Activated CD4-positive, alpha-beta T cell treated with anti-CD3 and anti-CD28 coated beads for 36 hours (primary cell): ENCODE measurements at regions of chr14 and their contacts with region 1.

Region 1: GRCh38 chr14:89365061-89365801 is 51.8 kb downstream of the FOXN3 start:
- DNase-seq: peak; percentile 72
- ATAC-seq: peak; percentile 92
- H3K4me3 Mint-ChIP-seq: peak overlapping the region; percentile 70
- H3K27ac Mint-ChIP-seq: peak overlapping the region; percentile 97
- H3K4me1 Mint-ChIP-seq: peaks cover 62% of the 10 kb centered on the region
- H3K27me3 Mint-ChIP-seq: no peaks in the 10 kb centered on the region

Region 2: GRCh38 chr14:89276424-89276975 is 88.7 kb before region 1 on chr14:
- CTCF ChIA-PET with region 1: interaction called, 4 read pairs
- POLR2A ChIA-PET with region 1: no interaction called
- intact Hi-C with region 1: loop called in 1 of 2 experiments (anchors 1 kb)
- DNase-seq: peak; percentile 87
- ATAC-seq: peak; percentile 91
- H3K4me3 Mint-ChIP-seq: peak overlapping the region; percentile 3
- H3K27ac Mint-ChIP-seq: peak overlapping the region; percentile 90
- H3K4me1 Mint-ChIP-seq: peaks cover 69% of the 10 kb centered on the region
- H3K27me3 Mint-ChIP-seq: no peaks in the 10 kb centered on the region

Region 3: DNA sequence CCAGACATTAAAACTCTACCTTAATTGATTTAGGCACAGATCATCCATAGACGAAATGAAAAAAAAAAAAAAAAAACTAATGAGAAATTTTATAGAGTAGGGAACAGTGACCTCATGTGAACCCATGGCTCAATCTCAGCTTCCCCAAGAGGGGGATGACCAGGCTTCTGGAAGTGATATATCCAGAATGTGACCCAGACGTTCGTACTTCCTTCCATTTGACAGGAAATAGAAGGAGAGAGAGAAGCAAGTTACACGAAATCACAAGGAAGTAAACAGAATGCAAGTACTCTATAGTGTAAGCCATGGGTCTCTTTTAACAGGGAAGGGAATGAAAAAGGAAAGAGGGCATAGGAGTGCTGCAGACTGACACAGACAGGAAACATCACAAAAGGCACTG is 41.7 kb after region 1 on chr14:
- CTCF ChIA-PET with region 1: no interaction called
- POLR2A ChIA-PET with region 1: no interaction called
- intact Hi-C with region 1: loop called in 1 of 2 experiments (anchors 2 kb)
- DNase-seq: no peak
- ATAC-seq: no peak
- H3K4me3 Mint-ChIP-seq: no peak overlapping the region
- H3K27ac Mint-ChIP-seq: peak overlapping the region; percentile 86
- H3K4me1 Mint-ChIP-seq: peaks cover 76% of the 10 kb centered on the region
- H3K27me3 Mint-ChIP-seq: no peaks in the 10 kb centered on the region

Region 4: GRCh38 chr14:89669193-89669592 is 304.0 kb after region 1 on chr14:
- CTCF ChIA-PET with region 1: no interaction called
- POLR2A ChIA-PET with region 1: no interaction called
- intact Hi-C with region 1: no loop called
- DNase-seq: peak; percentile 43
- ATAC-seq: peak; percentile 52
- H3K4me3 Mint-ChIP-seq: no peak overlapping the region
- H3K27ac Mint-ChIP-seq: no peak overlapping the region
- H3K4me1 Mint-ChIP-seq: peaks cover 30% of the 10 kb centered on the region
- H3K27me3 Mint-ChIP-seq: no peaks in the 10 kb centered on the region

Region 5: DNA sequence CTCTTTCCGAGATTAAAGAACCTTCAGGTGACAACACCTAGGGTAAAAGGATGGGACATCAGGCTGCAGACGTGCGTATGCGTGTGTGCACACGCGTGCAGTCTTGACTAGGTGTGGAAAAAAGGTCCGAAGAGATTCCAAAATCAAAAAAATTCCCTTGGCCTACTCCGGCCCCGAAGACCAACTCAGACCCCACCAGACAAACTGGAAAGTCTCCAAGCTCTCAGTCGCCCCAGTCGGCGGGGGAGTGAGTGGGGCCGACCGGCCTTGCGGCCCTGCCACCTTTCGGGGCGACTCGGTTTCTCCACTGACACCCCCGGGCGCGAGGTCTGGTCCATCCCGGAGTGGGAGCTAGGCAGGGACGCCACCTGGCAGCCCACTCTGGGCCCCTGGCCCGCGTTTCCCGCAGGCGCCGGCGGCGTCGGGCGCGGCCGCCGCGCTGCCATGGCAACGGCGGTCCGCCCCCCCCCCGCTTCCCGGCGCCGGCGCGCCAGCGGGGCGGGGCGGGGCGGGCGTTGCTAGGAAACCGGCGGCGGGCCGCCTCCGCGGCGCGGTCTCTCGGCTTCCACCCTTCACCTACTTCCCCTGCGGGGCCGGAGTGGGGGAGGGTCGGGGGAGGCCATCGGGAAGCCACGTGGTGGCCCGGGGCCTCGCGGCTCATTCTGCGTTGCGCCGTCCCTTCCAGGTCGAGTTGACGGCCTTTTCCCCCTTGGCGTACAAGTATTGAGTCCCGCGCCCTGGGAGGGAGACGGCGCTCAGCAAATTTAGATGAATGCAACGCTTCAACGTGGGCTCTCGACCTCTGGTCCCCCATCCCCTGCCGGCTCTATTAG is 336.2 kb after region 1 on chr14:
- CTCF ChIA-PET with region 1: no interaction called
- POLR2A ChIA-PET with region 1: no interaction called
- intact Hi-C with region 1: loop called in 1 of 2 experiments (anchors 5 kb)
- DNase-seq: peak; percentile 92
- ATAC-seq: peak; percentile 81
- H3K4me3 Mint-ChIP-seq: peak overlapping the region; percentile 65
- H3K27ac Mint-ChIP-seq: peak overlapping the region; percentile 83
- H3K4me1 Mint-ChIP-seq: peaks cover 49% of the 10 kb centered on the region
- H3K27me3 Mint-ChIP-seq: no peaks in the 10 kb centered on the region